ENCODE measurements at regions of chr7 and their contacts with region 1.

Region 1: DNA sequence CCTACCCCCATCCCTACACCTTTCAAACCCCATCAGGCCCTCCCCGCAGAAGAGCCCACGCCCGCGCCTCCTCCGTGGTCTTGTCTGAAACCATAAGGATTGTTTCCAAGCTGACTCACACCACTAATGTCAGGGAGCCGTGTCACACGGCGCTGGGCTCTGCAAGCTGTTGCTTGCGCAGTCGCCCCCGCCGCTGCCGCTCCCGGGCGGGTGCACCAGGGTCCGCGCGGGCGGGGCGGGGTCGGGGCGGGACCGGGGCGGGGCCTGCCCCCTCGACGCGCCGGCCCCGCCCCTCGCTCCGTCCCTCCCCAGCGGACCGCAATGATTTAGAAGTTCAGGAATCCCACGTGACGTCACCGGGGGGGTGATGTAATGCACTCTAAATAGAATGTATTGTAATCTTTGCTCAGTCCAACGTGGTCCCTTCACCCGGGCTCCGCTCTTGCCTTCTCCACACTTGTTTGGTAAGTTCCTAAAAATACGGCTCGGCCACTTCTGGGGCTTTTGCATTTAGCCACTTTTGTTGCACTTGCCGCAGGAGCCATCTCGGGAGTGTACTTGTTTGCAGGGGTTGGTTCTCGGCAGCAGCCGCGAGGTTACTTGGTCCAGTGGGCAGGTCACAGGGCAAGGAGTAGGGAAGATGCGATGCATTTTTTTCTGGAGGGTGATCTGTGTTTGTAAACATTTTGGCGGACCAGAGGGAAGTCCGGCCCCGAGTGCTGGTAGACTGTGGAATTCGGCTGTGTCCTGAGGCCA is 3.2 kb upstream of the CREB5 start:
- DNase-seq: peak; percentile 99
- H3K4me3 ChIP-seq: peak overlapping the region; percentile 45 to 77 (median 64)
- H3K27ac ChIP-seq: peak overlapping the region; percentile 86 to 93 (median 92)
- H3K4me1 ChIP-seq: peaks cover 0 to 43% (median 23%) of the 10 kb centered on the region in 4 donors
- H3K27me3 ChIP-seq: no peaks in the 10 kb centered on the region
- CTCF ChIP-seq: no peak
- EP300 ChIP-seq: peak in 1 of 4 donors; percentile 6
- POLR2A ChIP-seq: peak; percentile 50 to 67

Region 2: DNA sequence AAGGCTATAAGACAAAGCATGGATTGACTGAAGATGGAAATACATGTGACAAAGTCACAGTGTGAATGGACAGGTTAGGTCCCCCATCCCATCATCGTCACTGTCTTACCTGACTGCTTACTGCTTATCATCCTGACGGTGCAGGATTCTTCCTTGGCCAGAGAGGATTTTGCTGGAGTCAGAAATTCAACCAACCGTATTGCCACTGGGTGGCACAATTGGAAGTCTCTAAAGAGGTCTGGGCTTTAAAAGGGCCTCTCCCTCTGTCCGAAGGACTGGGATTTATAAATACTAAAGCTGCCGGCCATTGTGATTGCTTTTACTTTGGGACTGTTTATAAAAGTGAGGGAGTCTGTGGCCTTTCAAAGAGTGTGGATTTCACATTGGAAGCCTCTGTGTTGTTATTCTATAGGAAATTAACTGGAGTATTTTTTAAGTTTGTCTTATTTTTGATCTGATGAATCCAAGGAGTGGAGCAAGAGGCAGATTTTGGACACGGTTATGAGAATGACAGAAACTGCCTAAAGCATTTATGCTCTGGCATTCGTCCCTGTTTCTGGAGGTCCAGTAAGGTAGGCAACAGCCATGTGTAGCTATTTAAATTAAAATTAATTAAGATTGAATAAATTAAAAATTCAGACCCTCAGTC is 110.1 kb before region 1 on chr7:
- intact Hi-C with region 1: no loop called
- DNase-seq: no peak
- H3K4me3 ChIP-seq: no peak overlapping the region
- H3K27ac ChIP-seq: no peak overlapping the region
- H3K4me1 ChIP-seq: no peaks in the 10 kb centered on the region
- H3K27me3 ChIP-seq: no peaks in the 10 kb centered on the region
- CTCF ChIP-seq: peak in 3 of 4 experiments; percentile 29 to 38 (median 33)
- EP300 ChIP-seq: no peak
- POLR2A ChIP-seq: no peak

Region 3: GRCh38 chr7:28626624-28627262 is 217.6 kb after region 1 on chr7:
- intact Hi-C with region 1: loop called (anchors 5 kb)
- DNase-seq: no peak
- H3K4me3 ChIP-seq: no peak overlapping the region
- H3K27ac ChIP-seq: peak overlapping the region in 1 of 4 donors; percentile 48
- H3K4me1 ChIP-seq: peaks cover 0 to 53% (median 35%) of the 10 kb centered on the region in 4 donors
- H3K27me3 ChIP-seq: no peaks in the 10 kb centered on the region
- CTCF ChIP-seq: peak in 3 of 4 experiments; percentile 28 to 55 (median 29)
- EP300 ChIP-seq: no peak
- POLR2A ChIP-seq: no peak

Measured in sigmoid colon (tissue), 7 donors.